ENCODE measurements at regions of chr12 and their contacts with region 1.

Region 1: DNA sequence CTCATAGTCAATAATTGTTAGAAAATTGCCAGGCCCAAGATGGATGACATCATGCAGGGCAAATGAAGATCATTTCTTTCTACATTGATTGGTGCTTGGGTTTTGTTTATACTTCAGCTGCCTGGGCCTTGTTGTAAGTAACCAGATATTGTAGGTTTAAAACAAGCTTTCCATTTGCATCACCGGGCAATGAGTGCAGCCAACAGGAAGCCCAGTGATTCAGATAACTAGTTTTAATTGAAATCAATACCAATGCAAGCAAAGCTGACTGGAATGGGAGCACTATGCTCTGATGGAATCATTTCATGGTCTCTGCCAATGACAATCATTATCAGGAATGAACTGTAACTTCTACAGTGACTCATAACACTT is 279.3 kb downstream of the DUSP6 start:
- DNase-seq: peak; percentile 48
- H3K4me3 Mint-ChIP-seq: no peak overlapping the region
- H3K27ac Mint-ChIP-seq: peak overlapping the region; percentile 86
- H3K4me1 Mint-ChIP-seq: peaks cover 41% of the 10 kb centered on the region
- H3K27me3 Mint-ChIP-seq: no peaks in the 10 kb centered on the region

Region 2: GRCh38 chr12:88960213-88960878 is 112.7 kb before region 1 on chr12:
- CTCF ChIA-PET with region 1: no interaction called
- POLR2A ChIA-PET with region 1: no interaction called
- intact Hi-C with region 1: no loop called
- DNase-seq: no peak
- H3K4me3 Mint-ChIP-seq: no peak overlapping the region
- H3K27ac Mint-ChIP-seq: no peak overlapping the region
- H3K4me1 Mint-ChIP-seq: no peaks in the 10 kb centered on the region
- H3K27me3 Mint-ChIP-seq: peaks cover 3% of the 10 kb centered on the region

Region 3: DNA sequence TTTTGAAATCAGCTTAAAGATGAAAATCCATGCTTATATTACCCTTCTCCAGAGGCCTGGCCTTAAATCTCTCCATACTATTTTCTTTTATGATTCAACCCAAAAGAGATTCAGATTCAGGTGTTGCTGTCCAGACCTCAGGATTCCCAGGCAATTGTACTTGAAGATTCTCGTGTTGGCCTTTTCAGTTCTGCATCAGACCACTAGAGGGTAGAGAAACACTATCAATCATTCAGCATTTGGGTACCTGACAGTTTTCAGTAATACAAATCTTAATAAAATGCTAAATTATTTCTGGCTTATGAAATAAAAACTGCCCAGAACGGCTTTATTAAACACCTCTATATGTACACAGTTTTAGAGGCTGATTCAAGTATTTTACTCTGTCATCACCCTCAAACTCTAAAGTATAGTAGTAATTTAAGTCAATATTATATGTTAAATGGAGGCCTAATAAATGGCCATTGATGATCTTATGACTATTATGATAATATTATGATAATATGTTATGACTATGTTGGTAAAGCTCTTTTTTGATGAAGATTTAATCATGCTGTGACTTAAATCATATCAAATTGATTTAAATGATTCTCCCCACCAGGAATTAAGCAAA is 21.8 kb before region 1 on chr12:
- CTCF ChIA-PET with region 1: interaction called, 3 read pairs
- POLR2A ChIA-PET with region 1: no interaction called
- intact Hi-C with region 1: loop called (anchors 2 kb)
- DNase-seq: no peak
- H3K4me3 Mint-ChIP-seq: no peak overlapping the region
- H3K27ac Mint-ChIP-seq: no peak overlapping the region
- H3K4me1 Mint-ChIP-seq: peaks cover 13% of the 10 kb centered on the region
- H3K27me3 Mint-ChIP-seq: no peaks in the 10 kb centered on the region

Region 4: DNA sequence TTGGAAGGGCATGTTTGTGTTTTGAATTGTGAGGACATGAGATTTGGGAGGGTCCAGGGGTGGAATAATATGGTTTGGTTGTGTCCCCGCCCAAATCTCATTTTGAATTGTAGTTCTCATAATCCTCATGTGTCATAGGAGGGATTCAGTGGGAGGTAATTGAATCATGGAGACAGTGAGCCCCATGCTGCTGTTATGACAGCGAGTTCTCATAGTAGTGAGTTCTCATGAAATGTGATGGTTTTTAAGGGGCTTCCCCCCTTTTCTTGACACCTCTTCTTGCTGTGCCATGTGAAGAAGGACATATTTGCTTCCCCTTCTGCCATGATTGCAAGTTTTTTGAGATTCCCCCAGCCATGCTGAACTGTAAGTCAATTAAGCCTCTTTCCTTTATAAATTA is 19.3 kb after region 1 on chr12:
- CTCF ChIA-PET with region 1: interaction called, 4 read pairs
- POLR2A ChIA-PET with region 1: no interaction called
- intact Hi-C with region 1: loop called (anchors 1 kb)
- DNase-seq: peak; percentile 48
- H3K4me3 Mint-ChIP-seq: no peak overlapping the region
- H3K27ac Mint-ChIP-seq: peak overlapping the region; percentile 92
- H3K4me1 Mint-ChIP-seq: peaks cover 12% of the 10 kb centered on the region
- H3K27me3 Mint-ChIP-seq: peaks cover 3% of the 10 kb centered on the region

Region 5: DNA sequence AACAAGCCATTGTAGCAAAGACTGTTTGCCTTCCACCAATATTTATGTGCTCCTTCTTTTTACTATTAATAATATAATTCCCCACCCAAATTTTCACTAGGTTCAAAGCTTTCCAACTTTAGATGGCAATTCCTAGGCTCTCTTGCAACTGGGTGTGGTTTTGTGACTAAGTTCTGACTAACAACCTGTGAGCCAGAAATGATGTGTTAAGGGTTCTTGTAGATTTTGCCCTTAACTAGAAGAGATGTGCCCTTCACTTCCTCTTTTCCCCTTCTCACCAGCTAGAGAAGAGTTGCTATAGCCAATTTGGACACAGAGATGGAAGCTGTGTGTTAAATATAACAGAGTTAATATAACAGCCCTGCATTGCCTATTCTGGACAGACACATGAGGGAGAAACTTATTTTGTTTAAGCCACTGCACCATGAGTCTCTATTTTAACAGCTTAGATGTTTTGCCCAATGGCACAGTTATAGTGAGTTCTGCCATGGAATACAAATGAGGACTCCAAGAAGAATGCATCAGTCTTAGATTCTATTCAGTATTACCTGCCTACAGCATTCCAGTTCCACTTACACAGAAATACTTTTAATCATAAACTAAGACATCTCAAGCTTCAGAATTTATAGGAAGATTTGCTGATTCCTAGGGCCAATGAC is 63.1 kb after region 1 on chr12:
- CTCF ChIA-PET with region 1: no interaction called
- POLR2A ChIA-PET with region 1: no interaction called
- intact Hi-C with region 1: loop called (anchors 1 kb)
- DNase-seq: no peak
- H3K4me3 Mint-ChIP-seq: no peak overlapping the region
- H3K27ac Mint-ChIP-seq: no peak overlapping the region
- H3K4me1 Mint-ChIP-seq: peaks cover 31% of the 10 kb centered on the region
- H3K27me3 Mint-ChIP-seq: no peaks in the 10 kb centered on the region

Region 6: DNA sequence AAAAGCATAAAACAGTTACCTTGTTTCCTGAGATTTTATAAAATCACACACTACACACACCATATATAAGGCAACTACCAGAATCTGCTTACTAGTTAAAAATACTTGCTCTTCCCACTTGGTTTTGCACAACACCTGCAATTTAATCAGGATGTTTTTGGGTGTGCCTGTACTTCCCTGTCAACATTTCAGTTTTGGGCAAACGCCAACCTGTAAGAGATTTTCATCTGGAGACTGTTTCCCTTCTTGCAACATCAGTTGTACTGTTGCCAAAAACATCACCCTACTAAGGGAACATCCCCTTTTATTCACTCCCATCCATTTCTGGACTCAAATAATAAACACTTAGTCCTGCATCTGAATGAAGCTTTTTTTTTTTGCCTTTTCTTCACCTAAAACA is 107.0 kb after region 1 on chr12:
- CTCF ChIA-PET with region 1: no interaction called
- POLR2A ChIA-PET with region 1: no interaction called
- intact Hi-C with region 1: loop called (anchors 1 kb)
- DNase-seq: no peak
- H3K4me3 Mint-ChIP-seq: no peak overlapping the region
- H3K27ac Mint-ChIP-seq: peak overlapping the region; percentile 74
- H3K4me1 Mint-ChIP-seq: peaks cover 35% of the 10 kb centered on the region
- H3K27me3 Mint-ChIP-seq: no peaks in the 10 kb centered on the region

Region 7: DNA sequence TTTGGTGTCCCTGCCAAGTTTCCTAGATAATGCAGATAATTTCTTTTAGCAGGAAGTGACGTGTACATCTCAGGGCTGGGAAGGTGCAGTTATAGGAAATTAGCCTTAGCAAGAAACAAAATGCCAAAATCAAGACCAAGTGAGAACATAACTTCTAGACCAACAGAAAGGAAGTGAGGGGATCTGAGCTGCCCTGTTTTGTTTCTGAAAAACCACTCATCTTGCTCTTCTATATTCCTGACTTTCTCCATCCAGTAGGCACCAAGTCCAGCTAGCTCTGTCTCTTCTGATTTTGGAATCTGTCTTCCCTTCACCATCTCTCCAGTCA is 303.2 kb after region 1 on chr12:
- CTCF ChIA-PET with region 1: no interaction called
- POLR2A ChIA-PET with region 1: no interaction called
- intact Hi-C with region 1: loop called (anchors 2 kb)
- DNase-seq: no peak
- H3K4me3 Mint-ChIP-seq: no peak overlapping the region
- H3K27ac Mint-ChIP-seq: peak overlapping the region; percentile 62
- H3K4me1 Mint-ChIP-seq: peaks cover 20% of the 10 kb centered on the region
- H3K27me3 Mint-ChIP-seq: no peaks in the 10 kb centered on the region